ENCODE measurements at regions of chr6 and their contacts with region 1.

Region 1: DNA sequence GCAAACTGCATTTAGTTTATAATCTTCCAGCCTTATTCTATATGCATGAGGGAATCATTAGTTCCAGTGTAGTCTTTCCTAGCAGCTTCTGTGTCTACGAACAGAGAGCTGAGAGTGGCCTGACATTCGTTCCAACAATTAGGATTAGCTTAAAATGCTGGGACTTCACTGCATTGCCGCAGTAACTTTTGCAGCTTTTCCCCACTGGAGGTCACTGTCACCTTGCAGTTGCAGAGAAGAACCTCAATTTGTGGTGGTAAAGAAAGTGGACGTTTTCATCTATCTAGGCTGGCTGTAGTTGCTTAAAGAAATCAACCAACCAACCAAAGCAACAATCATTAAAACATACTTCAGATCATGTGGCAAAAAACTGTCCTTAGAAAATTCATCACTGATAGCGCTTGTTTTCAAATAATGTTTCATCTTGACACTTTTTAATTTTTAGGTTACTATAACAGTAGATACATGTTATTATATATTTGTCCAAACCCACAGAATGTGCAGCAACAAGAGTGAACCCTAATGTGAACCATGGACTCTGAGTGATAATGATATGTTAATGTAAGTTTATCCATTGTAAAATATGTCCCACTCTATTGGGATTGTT is 12.2 kb downstream of the MYLK4 start:
- DNase-seq: peak; percentile 69
- ATAC-seq: peak; percentile 46
- H3K4me3 Mint-ChIP-seq: no peak overlapping the region
- H3K27ac Mint-ChIP-seq: no peak overlapping the region
- H3K4me1 Mint-ChIP-seq: peaks cover 7% of the 10 kb centered on the region
- H3K27me3 Mint-ChIP-seq: peaks cover 4% of the 10 kb centered on the region

Region 2: DNA sequence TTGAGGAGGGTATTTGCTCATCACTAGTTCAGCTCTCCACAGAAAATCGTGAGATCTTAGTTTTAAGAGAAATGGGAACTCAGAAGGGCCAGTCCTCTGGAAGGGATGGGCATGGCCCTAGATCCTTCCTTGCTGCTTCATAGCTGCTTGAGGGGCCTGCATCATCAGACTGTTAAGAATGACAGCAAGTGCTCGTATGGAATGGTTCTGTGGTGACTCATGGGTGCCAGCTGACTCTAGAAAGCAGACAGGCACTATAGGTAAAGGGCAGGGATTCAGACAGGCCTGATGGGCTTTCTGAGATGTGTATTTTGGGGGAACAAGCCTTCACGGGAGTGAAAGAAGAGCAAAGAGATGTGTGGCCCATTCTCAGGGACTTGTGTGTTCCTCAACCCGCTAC is 78.6 kb before region 1 on chr6:
- CTCF ChIA-PET with region 1: no interaction called
- POLR2A ChIA-PET with region 1: no interaction called
- DNase-seq: no peak
- ATAC-seq: no peak
- H3K4me3 Mint-ChIP-seq: no peak overlapping the region
- H3K27ac Mint-ChIP-seq: no peak overlapping the region
- H3K4me1 Mint-ChIP-seq: no peaks in the 10 kb centered on the region
- H3K27me3 Mint-ChIP-seq: peaks cover 9% of the 10 kb centered on the region

Region 3: GRCh38 chr6:2725999-2726567 is 12.4 kb before region 1 on chr6:
- CTCF ChIA-PET with region 1: interaction called, 13 read pairs
- POLR2A ChIA-PET with region 1: no interaction called
- DNase-seq: no peak
- ATAC-seq: no peak
- H3K4me3 Mint-ChIP-seq: no peak overlapping the region
- H3K27ac Mint-ChIP-seq: no peak overlapping the region
- H3K4me1 Mint-ChIP-seq: no peaks in the 10 kb centered on the region
- H3K27me3 Mint-ChIP-seq: peaks cover 2% of the 10 kb centered on the region

Region 4: GRCh38 chr6:2749969-2750600 is 11.6 kb after region 1 on chr6:
- CTCF ChIA-PET with region 1: interaction called, 154 read pairs
- POLR2A ChIA-PET with region 1: no interaction called
- DNase-seq: peak; percentile 79
- ATAC-seq: peak; percentile 60
- H3K4me3 Mint-ChIP-seq: no peak overlapping the region
- H3K27ac Mint-ChIP-seq: no peak overlapping the region
- H3K4me1 Mint-ChIP-seq: peaks cover 23% of the 10 kb centered on the region
- H3K27me3 Mint-ChIP-seq: peaks cover 43% of the 10 kb centered on the region

Region 5: GRCh38 chr6:2756687-2757224 is 18.3 kb after region 1 on chr6:
- CTCF ChIA-PET with region 1: interaction called, 154 read pairs
- POLR2A ChIA-PET with region 1: interaction called, 3 read pairs
- DNase-seq: no peak
- ATAC-seq: no peak
- H3K4me3 Mint-ChIP-seq: no peak overlapping the region
- H3K27ac Mint-ChIP-seq: no peak overlapping the region
- H3K4me1 Mint-ChIP-seq: peaks cover 25% of the 10 kb centered on the region
- H3K27me3 Mint-ChIP-seq: peaks cover 23% of the 10 kb centered on the region

Region 6: DNA sequence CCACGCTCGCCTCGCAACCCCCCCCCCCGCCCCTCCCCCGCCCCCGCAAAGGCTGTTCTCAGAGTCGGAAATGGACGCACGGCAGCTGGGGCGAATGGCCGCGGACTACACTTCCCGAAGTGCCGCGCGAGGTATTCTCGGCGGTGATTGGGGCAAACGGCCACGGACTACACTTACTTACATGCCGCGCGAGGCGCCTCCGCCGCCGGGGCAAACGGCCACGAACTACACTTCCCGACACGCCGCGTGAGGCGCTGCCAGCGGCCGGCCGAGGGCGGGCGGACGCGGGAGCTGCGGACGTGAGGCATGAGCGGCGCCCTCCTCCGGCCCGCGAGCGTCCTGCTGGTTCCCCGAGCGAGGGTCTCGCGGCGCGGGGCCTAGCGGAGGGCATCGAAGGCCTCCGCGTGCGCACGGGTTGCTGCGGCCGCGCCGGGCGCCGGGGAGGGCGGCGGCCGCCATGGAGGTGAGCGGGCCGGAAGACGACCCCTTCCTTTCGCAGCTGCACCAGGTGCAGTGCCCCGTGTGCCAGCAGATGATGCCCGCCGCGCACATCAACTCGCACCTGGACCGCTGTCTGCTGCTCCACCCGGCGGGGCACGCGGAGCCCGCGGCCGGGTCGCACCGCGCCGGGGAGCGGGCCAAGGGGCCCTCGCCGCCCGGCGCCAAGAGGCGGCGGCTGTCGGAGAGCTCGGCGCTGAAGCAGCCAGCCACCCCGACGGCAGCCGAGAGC is 26.9 kb after region 1 on chr6 and contains the start of gene WRNIP1:
- CTCF ChIA-PET with region 1: interaction called, 76 read pairs
- POLR2A ChIA-PET with region 1: interaction called, 3 read pairs
- DNase-seq: peak; percentile 98
- ATAC-seq: peak; percentile 91
- H3K4me3 Mint-ChIP-seq: peak within 1 kb of the TSS; percentile 92
- H3K27ac Mint-ChIP-seq: peak within 1 kb of the TSS; percentile 97
- H3K4me1 Mint-ChIP-seq: peaks cover 55% of the 10 kb centered on the region
- H3K27me3 Mint-ChIP-seq: no peaks in the 10 kb centered on the region
- total RNA-seq, gene WRNIP1: 48.2 to 49.6 TPM